ENCODE measurements at regions of chr14 and their contacts with region 1.

Region 1: GRCh38 chr14:103281496-103282231 is 52.4 kb upstream of the EIF5 start:
- DNase-seq: no peak
- ATAC-seq: peak; percentile 82

Region 2: GRCh38 chr14:102421411-102422053 is 860.1 kb before region 1 on chr14:
- intact Hi-C with region 1: no loop called
- DNase-seq: no peak
- ATAC-seq: no peak

Region 3: GRCh38 chr14:103185051-103185992 is 96.3 kb before region 1 on chr14:
- intact Hi-C with region 1: loop called (anchors 10 kb)
- DNase-seq: no peak
- ATAC-seq: no peak

Region 4: GRCh38 chr14:103243764-103244737 is 37.6 kb before region 1 on chr14:
- intact Hi-C with region 1: no loop called
- DNase-seq: no peak
- ATAC-seq: no peak

Measured in Right ventricle myocardium superior (tissue), 1 donor.